ENCODE measurements at regions of chr3 and their contacts with region 1.

Region 1: GRCh38 chr3:13282986-13283876 is 136.9 kb downstream of the NUP210 start:
- DNase-seq: no peak
- ATAC-seq: peak; percentile 39
- H3K4me3 ChIP-seq: peak overlapping the region; percentile 76 to 94 (median 93)
- H3K27ac ChIP-seq: no peak overlapping the region
- H3K4me1 ChIP-seq: peaks cover 63% of the 10 kb centered on the region
- H3K27me3 ChIP-seq: peaks cover 2 to 26% of the 10 kb centered on the region in 2 experiments; a peak in 3 of 5 replicates
- CTCF ChIP-seq: peak; percentile 61
- EP300 ChIP-seq: no peak
- POLR2A ChIP-seq: 0 out of 4 replicates have a peak, but pooled peaks of 1 of the 2 experiments have one; percentile 32
- RAD21 ChIP-seq: peak; percentile 47

Region 2: GRCh38 chr3:12994607-12995388 is 288.4 kb before region 1 on chr3:
- CTCF ChIA-PET with region 1: no interaction called
- POLR2A ChIA-PET with region 1: no interaction called
- in situ Hi-C with region 1: no loop called
- intact Hi-C with region 1: no loop called
- DNase-seq: peak; percentile 70
- ATAC-seq: peak; percentile 75
- H3K4me3 ChIP-seq: peak overlapping the region; percentile 72 to 86 (median 81)
- H3K27ac ChIP-seq: peak overlapping the region; percentile 42
- H3K4me1 ChIP-seq: peaks cover 57% of the 10 kb centered on the region
- H3K27me3 ChIP-seq: no peaks in the 10 kb centered on the region
- CTCF ChIP-seq: peak; percentile 94
- EP300 ChIP-seq: no peak
- POLR2A ChIP-seq: peak in 1 of 2 experiments; percentile 33; a peak in 1 of 4 replicates
- RAD21 ChIP-seq: peak; percentile 94

Region 3: GRCh38 chr3:13091898-13092611 is 191.2 kb before region 1 on chr3:
- CTCF ChIA-PET with region 1: no interaction called
- POLR2A ChIA-PET with region 1: no interaction called
- in situ Hi-C with region 1: loop called (anchors 5 kb)
- intact Hi-C with region 1: loop called (anchors 2 kb)
- DNase-seq: peak; percentile 51
- ATAC-seq: peak; percentile 88
- H3K4me3 ChIP-seq: no peak overlapping the region
- H3K27ac ChIP-seq: no peak overlapping the region
- H3K4me1 ChIP-seq: peaks cover 17% of the 10 kb centered on the region
- H3K27me3 ChIP-seq: no peaks in the 10 kb centered on the region
- CTCF ChIP-seq: peak; percentile 91
- EP300 ChIP-seq: no peak
- POLR2A ChIP-seq: no peak
- RAD21 ChIP-seq: peak; percentile 91

Region 4: DNA sequence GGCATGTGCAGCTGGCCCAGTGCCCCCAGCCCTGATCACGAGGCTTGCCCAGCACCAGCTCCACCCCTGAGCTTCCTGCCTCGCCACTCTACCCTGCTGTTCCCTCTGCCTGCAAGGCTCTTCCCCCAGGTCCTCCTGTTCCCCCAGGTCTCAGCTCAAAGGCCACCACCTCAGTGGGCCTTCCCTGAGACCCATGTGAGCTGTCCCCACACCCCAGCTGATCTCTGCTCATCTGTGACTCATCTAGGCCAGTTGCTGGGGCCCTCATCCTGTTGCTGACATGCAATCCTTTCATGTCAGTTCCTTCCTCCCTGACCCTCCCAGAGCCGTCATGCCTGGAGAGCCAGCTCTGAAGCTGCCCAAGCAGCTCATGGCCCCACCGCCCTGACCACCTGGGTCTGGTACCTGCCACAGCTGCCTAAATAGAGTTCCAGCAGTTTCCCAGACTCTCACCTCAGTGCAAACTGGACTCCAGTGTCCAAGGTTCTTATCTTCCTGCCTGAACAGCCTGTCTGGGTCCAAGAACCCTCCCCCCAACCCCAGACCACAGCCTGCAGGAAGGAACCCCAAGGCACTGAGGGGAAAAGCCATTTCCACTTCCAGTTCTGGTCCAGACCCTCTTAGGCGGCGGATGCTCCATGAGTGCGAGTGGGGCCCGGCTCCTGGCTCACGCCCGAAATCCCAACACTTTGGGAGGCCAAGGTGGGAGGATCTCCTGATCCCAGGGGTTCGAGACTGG is 93.4 kb before region 1 on chr3:
- CTCF ChIA-PET with region 1: no interaction called
- POLR2A ChIA-PET with region 1: no interaction called
- in situ Hi-C with region 1: no loop called
- intact Hi-C with region 1: loop called (anchors 5 kb)
- DNase-seq: peak; percentile 90
- ATAC-seq: peak; percentile 86
- H3K4me3 ChIP-seq: peak overlapping the region in 1 of 3 experiments; percentile 14; a peak in 1 of 6 replicates
- H3K27ac ChIP-seq: peak overlapping the region; percentile 66
- H3K4me1 ChIP-seq: peaks cover 64% of the 10 kb centered on the region
- H3K27me3 ChIP-seq: no peaks in the 10 kb centered on the region
- CTCF ChIP-seq: peak; percentile 24; the same call in 1 of the 2 replicates
- EP300 ChIP-seq: peak in 1 of 2 experiments; percentile 80; a peak in 3 of 4 replicates
- POLR2A ChIP-seq: no peak
- RAD21 ChIP-seq: peak; percentile 37; the same call in 1 of the 2 replicates

Region 5: DNA sequence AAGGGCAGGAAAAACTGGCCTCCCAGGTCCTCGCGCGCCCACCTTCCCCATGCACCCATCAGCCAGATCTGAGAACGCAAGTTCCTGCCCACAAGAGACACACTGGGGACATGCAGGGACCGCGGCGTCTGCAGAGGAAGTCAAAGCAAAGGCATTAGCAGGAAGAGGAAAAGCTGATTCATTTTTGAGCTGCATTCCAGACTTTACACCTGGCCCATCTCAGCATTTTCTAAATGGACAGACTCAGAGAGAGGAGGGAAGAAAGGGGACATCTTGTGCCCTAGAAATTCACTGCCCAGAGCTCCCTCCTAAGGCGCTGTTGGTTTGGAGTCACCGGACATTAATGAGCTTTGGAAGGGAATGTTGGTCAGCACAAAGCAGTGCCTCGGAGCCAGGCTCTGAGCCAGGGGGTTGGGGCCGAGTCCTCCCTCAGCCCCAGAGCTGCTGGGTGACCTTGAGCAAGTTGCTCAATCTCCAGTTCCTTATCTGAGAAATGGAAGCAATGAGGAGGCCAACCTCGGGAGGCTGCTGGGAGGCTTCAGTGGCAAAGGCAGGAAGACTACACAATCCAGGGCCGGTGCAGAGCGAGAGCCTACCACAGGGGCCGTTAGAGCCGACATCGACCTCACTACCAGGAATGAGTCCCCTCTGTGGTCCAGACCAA is 59.5 kb before region 1 on chr3:
- CTCF ChIA-PET with region 1: no interaction called
- POLR2A ChIA-PET with region 1: interaction called, 3 read pairs
- in situ Hi-C with region 1: no loop called
- intact Hi-C with region 1: loop called (anchors 1 kb)
- DNase-seq: peak; percentile 79
- ATAC-seq: peak; percentile 85
- H3K4me3 ChIP-seq: peak overlapping the region in 1 of 3 experiments; percentile 32; a peak in 1 of 6 replicates
- H3K27ac ChIP-seq: peak overlapping the region; percentile 58
- H3K4me1 ChIP-seq: peaks cover 40% of the 10 kb centered on the region
- H3K27me3 ChIP-seq: no peaks in the 10 kb centered on the region
- CTCF ChIP-seq: no peak; the same call in 1 of the 2 replicates
- EP300 ChIP-seq: peak in 1 of 2 experiments; percentile 70; a peak in 2 of 4 replicates
- POLR2A ChIP-seq: no peak
- RAD21 ChIP-seq: no peak

Region 6: DNA sequence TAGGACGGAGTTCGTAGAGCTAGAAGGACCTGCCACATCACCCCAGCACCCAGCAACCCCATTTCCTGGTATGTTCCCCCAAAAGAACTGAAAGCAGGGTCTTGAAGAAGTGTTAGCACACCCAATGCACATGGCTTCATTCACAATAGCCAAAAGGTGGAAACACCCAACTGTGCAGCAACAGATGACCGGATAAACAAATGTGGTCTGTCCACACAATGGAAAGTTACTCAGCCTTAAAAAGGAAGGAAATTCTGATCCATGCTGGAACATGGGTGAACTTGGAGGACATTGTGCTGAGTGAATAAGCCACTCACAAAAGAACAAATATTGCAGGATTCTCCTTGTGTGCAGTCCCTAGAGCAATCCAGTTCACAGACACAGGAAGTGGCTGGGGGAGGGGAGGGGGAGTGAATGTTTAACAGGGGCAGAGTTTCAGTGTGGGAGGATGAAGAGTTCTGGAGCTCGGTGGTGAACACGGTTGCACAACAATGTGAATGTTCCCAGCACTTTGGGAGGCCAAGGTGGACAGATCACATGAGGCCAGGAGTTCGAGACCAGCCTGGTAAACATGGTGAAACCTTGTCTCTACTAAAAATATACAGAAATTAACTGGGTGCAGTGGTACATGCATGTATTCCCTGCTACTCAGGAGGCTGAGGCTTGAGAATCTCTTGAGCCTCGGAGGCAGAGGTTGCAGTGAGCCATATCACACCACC is 20.6 kb before region 1 on chr3:
- CTCF ChIA-PET with region 1: interaction called, 4 read pairs
- POLR2A ChIA-PET with region 1: interaction called, 6 read pairs
- in situ Hi-C with region 1: no loop called
- intact Hi-C with region 1: loop called (anchors 1 kb)
- DNase-seq: peak; percentile 99
- ATAC-seq: peak; percentile 72
- H3K4me3 ChIP-seq: no peak overlapping the region
- H3K27ac ChIP-seq: peak overlapping the region; percentile 93
- H3K4me1 ChIP-seq: peaks cover 92% of the 10 kb centered on the region
- H3K27me3 ChIP-seq: no peaks in the 10 kb centered on the region
- CTCF ChIP-seq: peak; percentile 18; the same call in 1 of the 2 replicates
- EP300 ChIP-seq: peak; percentile 36 to 96; a peak in 3 of 4 replicates
- POLR2A ChIP-seq: no peak
- RAD21 ChIP-seq: peak; percentile 36; the same call in 1 of the 2 replicates

Region 7: DNA sequence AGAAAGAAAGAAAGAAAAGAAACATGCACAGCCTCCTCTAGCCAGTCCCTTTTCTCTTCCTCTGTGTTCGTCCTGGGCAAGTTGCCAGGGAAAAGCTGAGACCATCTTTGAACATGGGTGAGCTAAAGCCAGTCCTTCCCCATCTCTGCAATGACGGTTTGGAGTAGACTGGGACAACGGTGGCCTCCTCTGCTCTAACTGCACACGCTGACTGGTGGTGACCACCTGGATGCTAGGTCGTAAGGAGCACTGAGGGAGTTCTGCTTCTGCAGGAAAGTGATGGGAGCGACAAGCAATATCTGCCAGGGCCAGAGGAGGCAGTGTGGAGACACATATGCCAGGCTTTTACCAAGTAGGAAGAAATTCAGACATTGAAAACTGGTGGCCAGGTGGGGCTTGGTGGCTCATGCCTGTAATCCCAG is 25.2 kb after region 1 on chr3:
- CTCF ChIA-PET with region 1: no interaction called
- POLR2A ChIA-PET with region 1: no interaction called
- in situ Hi-C with region 1: no loop called
- intact Hi-C with region 1: no loop called
- DNase-seq: peak; percentile 47
- ATAC-seq: peak; percentile 75
- H3K4me3 ChIP-seq: no peak overlapping the region
- H3K27ac ChIP-seq: no peak overlapping the region
- H3K4me1 ChIP-seq: peaks cover 17% of the 10 kb centered on the region
- H3K27me3 ChIP-seq: peaks cover 2 to 6% of the 10 kb centered on the region in 2 experiments; a peak in 2 of 5 replicates
- CTCF ChIP-seq: peak; percentile 68
- EP300 ChIP-seq: no peak
- POLR2A ChIP-seq: no peak
- RAD21 ChIP-seq: peak; percentile 47; the same call in 1 of the 2 replicates